Activated naive CD8-positive, alpha-beta T cell treated with anti-CD3 and anti-CD28 coated beads, Interleukin-2, amount 10 ng/mL, durations not matched to agents 7 days and 5 days (primary cell): ENCODE measurements at regions of chr4 and their contacts with region 1.

Region 1: DNA sequence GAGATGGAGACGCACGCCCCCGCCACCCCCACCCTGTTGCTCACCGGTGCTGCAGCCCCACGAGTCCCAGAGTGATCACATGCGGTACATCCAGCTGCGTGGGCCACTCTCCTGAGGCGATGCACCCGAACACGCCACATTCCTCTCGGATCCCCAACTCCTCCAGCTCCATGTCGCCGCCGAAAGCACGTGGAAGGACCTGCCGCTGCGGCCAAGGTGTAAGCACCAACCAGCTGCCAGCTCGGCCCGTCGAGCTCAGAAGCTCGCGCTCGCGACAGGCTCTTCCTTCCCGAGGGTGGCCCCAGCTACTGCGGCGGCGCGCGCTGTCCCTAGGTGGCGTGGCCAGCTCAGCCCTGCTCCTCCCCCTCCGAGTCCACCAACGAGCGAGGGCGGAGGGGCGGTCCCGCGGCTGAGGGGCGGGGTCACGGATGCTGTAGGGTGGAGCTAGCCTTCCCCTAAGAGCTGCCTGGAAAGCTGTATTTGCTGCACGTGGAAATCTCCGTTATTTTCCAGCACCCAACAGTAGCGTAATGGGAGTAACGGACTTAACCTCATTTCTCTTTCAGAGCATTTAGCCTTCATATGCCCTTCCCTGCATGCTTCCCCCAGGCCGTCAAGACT is at the start of gene PPAT:
- DNase-seq: peak; percentile 99
- ATAC-seq: peak; percentile 81
- H3K4me3 Mint-ChIP-seq: peak within 1 kb of the TSS; percentile 99
- H3K27ac Mint-ChIP-seq: peak within 1 kb of the TSS; percentile 97
- H3K4me1 Mint-ChIP-seq: peaks cover 41% of the 10 kb centered on the region
- H3K27me3 Mint-ChIP-seq: no peaks in the 10 kb centered on the region
- total RNA-seq, gene PPAT: 20.8 to 22.4 TPM

Region 2: GRCh38 chr4:56289934-56290333 is 145.5 kb before region 1 on chr4:
- POLR2A ChIA-PET with region 1: no interaction called
- DNase-seq: no peak
- ATAC-seq: peak; percentile 33
- H3K4me3 Mint-ChIP-seq: peak overlapping the region; percentile 58
- H3K27ac Mint-ChIP-seq: no peak overlapping the region
- H3K4me1 Mint-ChIP-seq: peaks cover 8% of the 10 kb centered on the region
- H3K27me3 Mint-ChIP-seq: peaks cover 3% of the 10 kb centered on the region

Region 3: DNA sequence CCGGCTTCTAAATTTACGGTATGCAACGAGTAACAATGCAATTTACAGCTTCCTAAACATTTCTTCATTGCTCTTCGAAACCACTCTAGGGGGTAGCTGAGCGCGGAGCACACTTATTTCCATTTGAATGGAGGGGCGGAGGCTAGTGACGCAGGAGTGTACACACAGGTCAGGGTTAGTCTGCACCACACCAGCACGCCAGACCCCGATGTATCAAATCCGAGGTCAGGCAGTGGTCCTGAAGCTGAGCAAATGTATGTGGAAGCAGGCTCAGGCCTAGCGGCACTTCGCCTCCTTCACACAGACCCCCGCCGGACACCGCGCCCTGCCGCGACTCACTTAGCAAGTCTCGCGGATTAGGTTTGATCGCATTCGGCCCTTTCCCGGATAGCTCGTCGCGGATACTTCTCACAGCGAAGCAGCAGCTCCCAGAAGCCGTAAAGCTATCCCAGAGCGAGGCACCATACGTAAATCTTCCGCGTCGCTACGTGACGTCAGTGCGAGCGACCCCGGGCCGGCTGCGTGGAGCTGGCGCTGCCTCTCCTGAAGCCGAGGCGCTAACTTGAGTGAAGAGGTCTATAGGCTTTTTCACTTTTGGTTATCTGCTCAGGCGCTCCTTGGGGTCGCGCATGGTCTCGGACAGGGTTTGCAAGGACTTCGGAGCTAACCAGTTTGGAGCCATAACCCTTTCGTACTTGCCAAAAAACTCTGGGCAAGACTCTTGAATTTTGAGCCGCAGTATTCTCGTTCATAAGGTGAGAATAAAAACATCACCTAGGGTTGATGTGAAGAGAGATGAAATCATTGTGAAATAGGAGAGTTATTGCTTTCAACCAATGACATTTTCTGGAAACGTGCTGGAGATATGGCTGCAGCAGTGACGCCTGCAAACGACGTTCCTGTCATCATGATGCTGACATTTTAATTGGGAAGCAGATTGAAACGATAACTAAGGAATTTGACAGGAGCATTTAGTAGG is 48.1 kb before region 1 on chr4 and contains the start of gene AASDH:
- POLR2A ChIA-PET with region 1: interaction called, 46 read pairs
- DNase-seq: peak; percentile 96
- ATAC-seq: peak; percentile 93
- H3K4me3 Mint-ChIP-seq: peak within 1 kb of the TSS; percentile 94
- H3K27ac Mint-ChIP-seq: peak within 1 kb of the TSS; percentile 99
- H3K4me1 Mint-ChIP-seq: peaks cover 21% of the 10 kb centered on the region
- H3K27me3 Mint-ChIP-seq: no peaks in the 10 kb centered on the region
- total RNA-seq, gene AASDH: 10.3 to 12.8 TPM

Region 4: GRCh38 chr4:56467284-56468096 is 32.1 kb after region 1 on chr4 and contains the start of gene SRP72:
- POLR2A ChIA-PET with region 1: interaction called, 38 read pairs
- DNase-seq: peak; percentile 88
- ATAC-seq: peak; percentile 91
- H3K4me3 Mint-ChIP-seq: peak within 1 kb of the TSS; percentile 94
- H3K27ac Mint-ChIP-seq: peak within 1 kb of the TSS; percentile 96
- H3K4me1 Mint-ChIP-seq: peaks cover 42% of the 10 kb centered on the region
- H3K27me3 Mint-ChIP-seq: no peaks in the 10 kb centered on the region
- total RNA-seq, gene SRP72: 123 to 124 TPM

Region 5: DNA sequence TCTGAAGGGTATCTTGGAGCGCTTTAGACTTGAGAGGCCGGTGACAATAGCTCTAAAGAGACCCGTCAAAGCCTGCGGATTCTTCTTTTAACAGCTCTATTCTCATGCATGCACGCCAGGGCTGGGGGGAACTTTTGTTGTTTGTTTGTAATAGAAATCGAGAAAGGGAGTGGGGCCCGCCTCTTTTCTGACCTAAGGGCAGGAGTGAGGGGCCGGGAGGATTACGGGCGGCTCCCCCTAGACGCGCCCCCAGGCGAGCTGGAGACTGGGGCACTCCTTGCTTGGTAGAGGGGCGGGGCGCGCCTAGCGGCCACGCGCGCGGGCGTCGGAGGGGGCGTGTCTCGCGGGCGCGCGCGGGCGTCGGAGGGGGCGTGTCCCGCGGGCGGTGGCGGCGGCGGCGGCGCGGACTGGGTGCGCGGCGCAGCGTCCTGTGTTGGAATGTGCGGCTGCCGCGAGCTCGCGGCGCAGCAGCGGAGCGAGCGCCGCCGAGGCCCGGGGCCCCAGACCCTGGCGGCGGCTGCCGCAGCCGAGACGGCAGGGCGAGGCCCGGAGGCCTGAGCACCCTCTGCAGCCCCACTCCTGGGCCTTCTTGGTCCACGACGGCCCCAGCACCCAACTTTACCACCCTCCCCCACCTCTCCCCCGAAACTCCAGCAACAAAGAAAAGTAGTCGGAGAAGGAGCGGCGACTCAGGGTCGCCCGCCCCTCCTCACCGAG is 472.2 kb after region 1 on chr4 and contains the start of gene REST:
- POLR2A ChIA-PET with region 1: interaction called, 14 read pairs
- DNase-seq: peak; percentile 92
- ATAC-seq: peak; percentile 57
- H3K4me3 Mint-ChIP-seq: peak within 1 kb of the TSS; percentile 84
- H3K27ac Mint-ChIP-seq: peak within 1 kb of the TSS; percentile 78
- H3K4me1 Mint-ChIP-seq: peaks cover 35% of the 10 kb centered on the region
- H3K27me3 Mint-ChIP-seq: peaks cover 3% of the 10 kb centered on the region
- total RNA-seq, gene REST: 52.2 to 56.7 TPM